ENCODE measurements at regions of chr17 and their contacts with region 1.

Region 1: DNA sequence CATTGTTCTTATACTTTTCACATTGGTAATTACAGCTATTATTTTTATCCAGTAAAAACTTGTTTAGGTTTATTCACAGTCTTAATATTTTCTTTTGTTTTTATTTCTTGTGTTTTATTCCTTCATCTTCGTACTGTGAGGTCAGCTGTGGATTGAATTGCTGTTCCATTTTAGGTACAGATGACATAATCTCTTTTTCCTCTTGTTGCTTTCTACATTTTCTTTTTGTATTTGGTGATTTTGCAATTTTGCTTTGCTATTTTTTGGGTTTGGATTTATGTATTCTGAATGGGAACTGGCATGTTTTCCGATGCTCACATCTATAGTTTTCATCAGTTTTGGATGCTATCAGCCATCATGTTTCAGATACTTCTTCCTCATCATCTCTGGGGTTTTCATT is 21.8 kb upstream of the WIPI1 start:
- DNase-seq: no peak
- ATAC-seq: no peak
- H3K4me3 ChIP-seq: no peak overlapping the region
- H3K27ac ChIP-seq: no peak overlapping the region
- H3K4me1 ChIP-seq: no peaks in the 10 kb centered on the region
- H3K27me3 ChIP-seq: peaks cover 8% of the 10 kb centered on the region
- CTCF ChIP-seq: no peak

Region 2: DNA sequence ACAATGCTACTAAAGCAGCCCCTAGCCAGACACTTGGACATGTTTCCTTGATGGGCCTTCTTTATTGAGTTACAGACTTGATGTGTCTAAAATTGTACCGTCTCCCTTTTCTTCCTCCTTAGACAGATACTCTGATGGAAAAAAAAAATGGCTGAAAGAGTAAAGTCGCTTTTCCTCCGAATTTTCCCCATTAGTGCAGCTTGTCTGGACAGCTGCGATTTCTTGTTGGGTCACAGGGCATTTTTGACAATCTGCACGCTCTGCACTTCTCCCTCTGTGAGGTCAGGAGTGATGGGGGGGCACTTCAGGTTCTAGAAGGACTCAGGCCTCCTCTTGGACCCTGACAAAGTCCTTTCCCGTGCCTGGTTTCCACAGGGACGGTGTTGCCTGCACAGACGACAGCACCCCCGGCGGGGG is 32.1 kb after region 1 on chr17:
- CTCF ChIA-PET with region 1: no interaction called
- POLR2A ChIA-PET with region 1: interaction called, 15 read pairs
- in situ Hi-C with region 1: no loop called
- intact Hi-C with region 1: no loop called
- DNase-seq: no peak
- ATAC-seq: no peak
- H3K4me3 ChIP-seq: peak overlapping the region; percentile 96 to 97
- H3K27ac ChIP-seq: peak overlapping the region; percentile 63
- H3K4me1 ChIP-seq: peaks cover 7% of the 10 kb centered on the region; the same call in 1 of the 2 replicates
- H3K27me3 ChIP-seq: no peaks in the 10 kb centered on the region
- CTCF ChIP-seq: no peak

Region 3: DNA sequence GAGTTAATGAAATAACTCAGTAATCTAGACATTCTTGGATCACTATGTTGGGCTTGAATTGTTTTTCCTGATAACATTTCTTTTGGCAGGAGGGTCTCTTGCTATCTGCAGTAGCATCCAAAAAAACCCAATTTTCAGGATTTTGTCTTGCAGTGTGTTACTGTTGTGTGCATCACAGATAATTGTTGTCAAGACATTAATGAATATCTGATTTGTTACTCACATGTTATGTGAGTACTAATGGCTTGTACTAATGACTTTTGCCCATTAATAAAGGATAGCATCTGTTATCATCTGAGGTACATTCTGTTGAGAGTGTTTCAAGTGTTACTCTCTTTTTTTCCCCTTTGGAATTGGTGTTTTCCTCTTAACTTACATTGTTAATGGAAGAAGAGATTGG is 43.1 kb after region 1 on chr17:
- CTCF ChIA-PET with region 1: no interaction called
- POLR2A ChIA-PET with region 1: no interaction called
- in situ Hi-C with region 1: no loop called
- intact Hi-C with region 1: no loop called
- DNase-seq: no peak
- ATAC-seq: no peak
- H3K4me3 ChIP-seq: no peak overlapping the region
- H3K27ac ChIP-seq: no peak overlapping the region
- H3K4me1 ChIP-seq: no peaks in the 10 kb centered on the region
- H3K27me3 ChIP-seq: no peaks in the 10 kb centered on the region
- CTCF ChIP-seq: no peak

Measured in Panc1 (cell line).